Heart left ventricle (tissue), 16 donors: ENCODE measurements at regions of chr6 and their contacts with region 1.

Region 1: GRCh38 chr6:43454696-43455530 is 435 bp downstream of the DLK2 start:
- DNase-seq: peak; percentile 84 to 93 (median 89)
- ATAC-seq: peak; percentile 67 to 91 (median 90)
- H3K4me3 ChIP-seq: peak overlapping the region; percentile 19 to 64 (median 54)
- H3K27ac ChIP-seq: peak overlapping the region in 2 of 12 donors; percentile 24 to 34
- H3K4me1 ChIP-seq: peaks cover 0 to 23% (median 5%) of the 10 kb centered on the region in 12 donors
- H3K27me3 ChIP-seq: peaks cover 0 to 26% (median 6%) of the 10 kb centered on the region in 9 donors
- CTCF ChIP-seq: peak in 4 of 12 donors; percentile 2 to 7 (median 4)
- POLR2A ChIP-seq: no peak

Region 2: DNA sequence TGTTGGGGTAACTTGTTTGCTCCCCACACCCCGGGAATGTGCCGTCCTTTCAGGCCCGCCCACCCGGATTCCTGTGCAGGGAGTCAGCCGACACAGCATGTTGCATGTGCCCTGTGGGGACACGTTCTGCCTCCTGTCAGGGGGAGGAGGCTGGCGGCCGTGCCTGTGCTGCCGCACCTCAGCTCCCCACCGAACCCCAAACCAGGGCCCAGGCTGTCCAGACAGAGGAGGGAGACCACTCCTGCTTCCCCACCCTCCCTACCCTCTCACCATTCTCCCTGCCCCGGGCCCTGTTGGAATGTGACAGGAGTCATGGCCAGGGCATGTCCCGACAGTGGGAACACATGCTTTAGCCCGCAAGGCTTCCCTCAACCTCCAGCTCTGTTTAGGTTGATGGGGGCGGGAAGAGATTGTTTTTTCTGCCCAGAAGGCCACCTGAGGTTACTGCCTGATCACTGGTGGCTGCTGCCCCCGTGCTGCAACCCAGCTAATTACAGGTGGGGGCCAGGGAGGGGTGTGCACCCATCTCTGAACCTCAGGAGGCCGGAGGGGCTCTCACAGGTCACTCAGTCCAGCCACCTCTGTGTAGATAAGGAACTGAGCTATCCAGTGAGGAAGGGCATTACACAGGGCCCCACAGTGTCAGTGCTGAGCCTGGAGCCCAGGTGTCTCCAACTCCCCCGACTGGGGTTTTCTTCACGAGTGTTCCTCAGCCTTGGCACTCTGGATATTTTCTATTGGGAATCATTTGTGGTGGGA is 41.6 kb after region 1 on chr6:
- intact Hi-C with region 1: loop called in 5 of 10 experiments (anchors 1 to 2 kb)
- DNase-seq: no peak
- ATAC-seq: peak in 3 of 4 donors; percentile 33 to 42 (median 33)
- H3K4me3 ChIP-seq: no peak overlapping the region
- H3K27ac ChIP-seq: peak overlapping the region in 2 of 12 donors; percentile 35 to 63
- H3K4me1 ChIP-seq: peaks cover 0 to 63% (median 46%) of the 10 kb centered on the region in 12 donors
- H3K27me3 ChIP-seq: no peaks in the 10 kb centered on the region
- CTCF ChIP-seq: peak; percentile 34 to 73 (median 63)
- POLR2A ChIP-seq: no peak

Region 3: GRCh38 chr6:44606504-44606903 is 1151.6 kb after region 1 on chr6:
- intact Hi-C with region 1: no loop called
- DNase-seq: peak in 4 of 5 donors; percentile 24 to 58 (median 48)
- ATAC-seq: peak in 3 of 4 donors; percentile 23 to 64 (median 49)
- H3K4me3 ChIP-seq: no peak overlapping the region
- H3K27ac ChIP-seq: no peak overlapping the region
- H3K4me1 ChIP-seq: peaks cover 0 to 3% (median 0%) of the 10 kb centered on the region in 12 donors
- H3K27me3 ChIP-seq: no peaks in the 10 kb centered on the region
- CTCF ChIP-seq: no peak
- POLR2A ChIP-seq: no peak